PC-9 (cell line): ENCODE measurements at regions of chr2 and their contacts with region 1.

Region 1: GRCh38 chr2:204545023-204545860 is at the start of gene PARD3B:
- DNase-seq: peak; percentile 43 to 76
- H3K4me3 ChIP-seq: peak within 1 kb of the TSS; percentile 90
- H3K27ac ChIP-seq: peak within 1 kb of the TSS; percentile 61
- H3K4me1 ChIP-seq: peaks cover 31% of the 10 kb centered on the region
- H3K27me3 ChIP-seq: no peaks in the 10 kb centered on the region
- CTCF ChIP-seq: no peak
- total RNA-seq, gene PARD3B: 7.6 and 13.2 TPM in 2 replicates

Region 2: GRCh38 chr2:204260162-204260877 is 284.9 kb before region 1 on chr2:
- CTCF ChIA-PET with region 1: no interaction called
- POLR2A ChIA-PET with region 1: no interaction called
- intact Hi-C with region 1: loop called (anchors 5 kb)
- DNase-seq: peak; percentile 24 to 35
- H3K4me3 ChIP-seq: no peak overlapping the region
- H3K27ac ChIP-seq: no peak overlapping the region
- H3K4me1 ChIP-seq: no peaks in the 10 kb centered on the region
- H3K27me3 ChIP-seq: no peaks in the 10 kb centered on the region
- CTCF ChIP-seq: peak; percentile 81

Region 3: GRCh38 chr2:204452464-204453023 is 92.7 kb before region 1 on chr2:
- CTCF ChIA-PET with region 1: no interaction called
- POLR2A ChIA-PET with region 1: no interaction called
- intact Hi-C with region 1: loop called (anchors 5 kb)
- DNase-seq: peak; percentile 60 to 95
- H3K4me3 ChIP-seq: no peak overlapping the region
- H3K27ac ChIP-seq: peak overlapping the region; percentile 36; the same call in 1 of the 2 replicates
- H3K4me1 ChIP-seq: peaks cover 15% of the 10 kb centered on the region
- H3K27me3 ChIP-seq: no peaks in the 10 kb centered on the region
- CTCF ChIP-seq: no peak

Region 4: DNA sequence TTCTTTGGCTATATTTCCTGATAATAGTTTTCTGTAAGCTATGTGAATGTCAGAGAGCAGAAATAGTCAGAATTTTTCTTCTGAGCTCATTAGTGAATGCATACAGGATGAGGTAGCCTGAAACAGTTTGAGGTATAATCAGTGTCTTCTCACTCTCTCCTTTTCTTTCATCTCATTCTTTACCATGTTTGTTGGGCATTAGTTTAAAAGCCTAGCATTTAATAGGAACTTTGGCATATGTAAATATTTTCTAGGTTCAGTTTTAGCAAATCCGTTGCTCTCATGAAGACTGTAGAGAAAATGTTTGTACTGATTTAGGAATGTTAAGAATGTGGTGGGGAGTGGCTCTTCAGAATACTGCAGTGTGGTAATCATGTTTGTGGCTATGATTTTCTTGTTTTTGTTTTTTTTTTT is 119.5 kb after region 1 on chr2:
- CTCF ChIA-PET with region 1: no interaction called
- POLR2A ChIA-PET with region 1: interaction called, 3 read pairs
- intact Hi-C with region 1: loop called (anchors 5 kb)
- DNase-seq: peak in 1 of 2 experiments; percentile 79
- H3K4me3 ChIP-seq: no peak overlapping the region
- H3K27ac ChIP-seq: peak overlapping the region; percentile 90
- H3K4me1 ChIP-seq: peaks cover 26% of the 10 kb centered on the region
- H3K27me3 ChIP-seq: no peaks in the 10 kb centered on the region
- CTCF ChIP-seq: no peak